Prostate gland (tissue), 2 donors: ENCODE measurements at regions of chr5 and their contacts with region 1.

Region 1: GRCh38 chr5:115069087-115069968 is 100.4 kb downstream of the TRIM36 start:
- DNase-seq: peak; percentile 20
- H3K4me3 ChIP-seq: no peak overlapping the region
- H3K27ac ChIP-seq: no peak overlapping the region
- H3K4me1 ChIP-seq: no peaks in the 10 kb centered on the region
- H3K27me3 ChIP-seq: no peaks in the 10 kb centered on the region
- CTCF ChIP-seq: peak in 3 of 4 experiments; percentile 32 to 59 (median 53)
- POLR2A ChIP-seq: no peak

Region 2: DNA sequence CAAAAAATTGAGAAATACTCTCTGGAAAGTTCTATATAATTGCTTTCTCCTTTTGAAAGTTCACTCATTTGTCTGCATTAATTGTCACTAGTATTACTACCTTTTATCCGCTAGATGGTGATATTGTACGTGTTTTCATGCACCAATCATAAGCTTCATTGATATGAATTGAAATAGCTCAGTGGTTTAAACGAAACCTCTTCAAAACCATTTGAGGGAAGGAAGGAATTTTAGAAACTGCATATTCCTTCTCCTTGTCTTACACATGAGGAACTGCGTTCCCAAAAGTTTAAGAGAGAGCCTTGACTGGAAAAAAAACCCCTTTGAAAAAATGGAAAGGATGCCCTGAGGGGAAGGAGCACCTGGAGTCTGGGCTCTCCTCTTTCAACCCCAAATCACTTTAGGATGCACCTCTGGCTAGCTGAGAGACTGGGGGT is 1457.2 kb before region 1 on chr5:
- intact Hi-C with region 1: loop called (anchors 5 kb)
- DNase-seq: no peak
- H3K4me3 ChIP-seq: no peak overlapping the region
- H3K27ac ChIP-seq: no peak overlapping the region
- H3K4me1 ChIP-seq: no peaks in the 10 kb centered on the region
- H3K27me3 ChIP-seq: no peaks in the 10 kb centered on the region
- CTCF ChIP-seq: peak in 3 of 4 experiments; percentile 60 to 70 (median 68)
- POLR2A ChIP-seq: no peak

Region 3: DNA sequence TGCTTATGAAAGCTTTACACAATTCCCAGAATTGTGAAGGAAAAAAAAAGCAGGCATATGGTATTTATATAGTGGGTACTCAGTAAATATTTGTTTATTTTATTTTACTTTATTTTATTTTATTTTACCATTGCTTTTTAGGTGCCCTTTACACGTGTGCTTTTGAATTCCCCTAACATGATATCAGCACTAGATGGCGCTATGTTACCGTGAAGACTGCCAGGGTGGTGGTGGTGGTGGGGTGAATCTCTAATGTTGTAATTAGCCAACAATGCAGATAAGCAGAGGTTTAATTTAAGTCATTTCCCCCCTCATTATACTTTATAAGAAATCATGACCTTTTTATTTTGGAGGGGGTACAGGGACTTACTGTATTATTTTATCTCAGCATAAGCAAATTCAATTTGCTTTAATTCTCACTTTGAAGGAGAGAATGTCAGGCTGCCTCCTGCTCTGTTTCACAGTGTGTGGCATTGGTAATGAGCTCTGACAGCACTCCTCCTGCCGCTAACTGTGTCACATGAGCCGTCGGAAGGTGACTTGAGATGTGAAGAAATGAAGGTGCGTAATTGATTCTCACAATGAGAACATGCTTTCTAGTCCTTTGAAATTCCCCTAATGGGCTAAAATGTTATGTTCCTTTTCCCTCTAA is 1390.3 kb before region 1 on chr5:
- intact Hi-C with region 1: loop called (anchors 10 kb)
- DNase-seq: no peak
- H3K4me3 ChIP-seq: no peak overlapping the region
- H3K27ac ChIP-seq: no peak overlapping the region
- H3K4me1 ChIP-seq: no peaks in the 10 kb centered on the region
- H3K27me3 ChIP-seq: no peaks in the 10 kb centered on the region
- CTCF ChIP-seq: peak; percentile 33 to 67 (median 63)
- POLR2A ChIP-seq: no peak

Region 4: GRCh38 chr5:114924769-114925168 is 144.6 kb before region 1 on chr5:
- intact Hi-C with region 1: no loop called
- DNase-seq: no peak
- H3K4me3 ChIP-seq: no peak overlapping the region
- H3K27ac ChIP-seq: no peak overlapping the region
- H3K4me1 ChIP-seq: no peaks in the 10 kb centered on the region
- H3K27me3 ChIP-seq: no peaks in the 10 kb centered on the region
- CTCF ChIP-seq: no peak
- POLR2A ChIP-seq: no peak

Region 5: GRCh38 chr5:114969490-114969889 is 99.8 kb before region 1 on chr5:
- intact Hi-C with region 1: no loop called
- DNase-seq: no peak
- H3K4me3 ChIP-seq: no peak overlapping the region
- H3K27ac ChIP-seq: no peak overlapping the region
- H3K4me1 ChIP-seq: no peaks in the 10 kb centered on the region
- H3K27me3 ChIP-seq: no peaks in the 10 kb centered on the region
- CTCF ChIP-seq: no peak
- POLR2A ChIP-seq: no peak